ENCODE measurements at regions of chr7 and their contacts with region 1.

Region 1: DNA sequence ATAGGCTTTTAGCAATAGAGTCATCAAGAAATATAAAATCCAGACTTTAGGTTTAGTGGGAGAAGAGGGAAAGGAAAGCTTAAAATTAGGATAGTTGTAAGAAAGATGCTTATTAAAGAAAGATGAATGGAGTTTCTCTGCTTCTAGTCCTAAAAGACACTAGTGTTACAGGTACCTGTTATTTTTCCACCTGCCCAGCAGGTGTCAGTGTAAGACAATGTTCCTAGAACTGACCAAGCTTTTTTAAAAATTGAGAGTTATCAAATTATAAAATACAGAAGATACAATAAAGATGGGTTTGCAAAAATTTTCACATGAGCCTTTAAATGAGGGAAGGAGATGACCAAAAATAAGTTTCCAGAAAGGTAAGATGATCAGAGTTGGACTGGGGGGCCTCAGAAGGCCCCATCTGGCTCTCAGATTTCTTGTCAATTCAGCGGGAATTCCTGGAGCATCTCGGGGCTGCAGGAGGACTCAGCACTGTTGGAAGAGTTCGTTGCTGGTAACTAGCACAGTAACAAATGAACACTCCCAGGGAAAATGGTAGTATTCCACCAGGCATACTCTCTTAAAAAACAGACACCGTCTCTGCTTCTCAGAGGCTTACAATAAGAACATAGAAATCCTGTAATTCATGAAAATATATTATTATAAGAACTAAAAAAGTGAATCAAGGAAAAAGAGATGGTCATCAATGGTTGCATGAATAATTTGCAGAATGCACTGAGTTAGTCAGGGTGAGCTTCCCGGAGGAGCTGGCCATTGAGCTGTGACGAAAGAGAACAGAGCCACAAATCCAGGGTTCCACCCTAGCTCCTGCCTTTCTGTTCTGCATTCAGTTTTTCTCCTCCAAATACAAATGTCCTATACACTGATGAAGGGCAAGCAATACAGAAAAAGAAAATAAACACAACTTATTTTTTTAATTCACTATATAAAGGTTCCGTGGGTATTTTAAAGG is 71.8 kb upstream of the PIK3CG start:
- DNase-seq: peak in 9 of 14 experiments; percentile 12 to 78 (median 22)
- ATAC-seq: peak; percentile 58
- H3K4me3 ChIP-seq: no peak overlapping the region
- H3K4me3 Mint-ChIP-seq: no peak overlapping the region
- H3K27ac ChIP-seq: no peak overlapping the region
- H3K27ac Mint-ChIP-seq: no peak overlapping the region
- H3K4me1 ChIP-seq: no peaks in the 10 kb centered on the region
- H3K4me1 Mint-ChIP-seq: peaks cover 3% of the 10 kb centered on the region
- H3K27me3 ChIP-seq: no peaks in the 10 kb centered on the region
- H3K27me3 Mint-ChIP-seq: no peaks in the 10 kb centered on the region
- CTCF ChIP-seq: peak; percentile 88

Region 2: GRCh38 chr7:106865130-106866041 is 72.1 kb after region 1 on chr7 and contains the start of gene PIK3CG:
- CTCF ChIA-PET with region 1: no interaction called
- POLR2A ChIA-PET with region 1: no interaction called
- intact Hi-C with region 1: loop called (anchors 1 kb)
- DNase-seq: peak in 5 of 14 experiments; percentile 6 to 86 (median 75)
- ATAC-seq: peak; percentile 94
- H3K4me3 ChIP-seq: peak within 1 kb of the TSS; percentile 62
- H3K4me3 Mint-ChIP-seq: peak within 1 kb of the TSS; percentile 92
- H3K27ac ChIP-seq: peak within 1 kb of the TSS; percentile 77 to 80
- H3K27ac Mint-ChIP-seq: peak within 1 kb of the TSS; percentile 93
- H3K4me1 ChIP-seq: peaks cover 61% of the 10 kb centered on the region
- H3K4me1 Mint-ChIP-seq: peaks cover 82% of the 10 kb centered on the region
- H3K27me3 ChIP-seq: no peaks in the 10 kb centered on the region
- H3K27me3 Mint-ChIP-seq: no peaks in the 10 kb centered on the region
- CTCF ChIP-seq: no peak
- total RNA-seq, gene PIK3CG: 20.8 to 21.2 TPM

Region 3: DNA sequence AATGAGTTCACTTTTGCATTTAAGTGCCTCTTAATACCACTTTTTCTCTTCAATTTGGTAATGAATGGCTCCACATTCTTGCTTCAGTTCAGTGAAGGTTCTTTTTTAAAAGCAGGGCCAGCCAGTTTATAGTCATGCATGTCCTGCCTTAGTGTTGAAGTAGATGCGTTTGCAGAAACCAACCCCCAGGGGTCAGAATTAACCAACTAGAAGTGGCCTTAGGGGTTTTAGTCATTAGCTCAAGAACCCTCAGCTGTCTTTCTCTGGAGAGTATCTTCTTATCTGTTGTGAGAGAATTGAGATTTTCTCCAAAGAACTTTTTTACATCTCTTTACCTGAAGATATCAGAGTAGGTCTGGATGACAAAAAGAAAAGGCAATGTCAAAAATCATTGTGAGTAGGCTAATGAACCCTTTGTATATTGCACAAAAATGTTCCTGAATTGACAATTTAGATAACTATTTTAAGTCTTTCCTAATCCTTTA is 154.0 kb after region 1 on chr7:
- CTCF ChIA-PET with region 1: no interaction called
- POLR2A ChIA-PET with region 1: no interaction called
- intact Hi-C with region 1: loop called in 1 of 2 experiments (anchors 2 kb)
- DNase-seq: peak in 8 of 14 experiments; percentile 5 to 66 (median 30)
- ATAC-seq: peak; percentile 59
- H3K4me3 ChIP-seq: no peak overlapping the region
- H3K4me3 Mint-ChIP-seq: no peak overlapping the region
- H3K27ac ChIP-seq: no peak overlapping the region
- H3K27ac Mint-ChIP-seq: no peak overlapping the region
- H3K4me1 ChIP-seq: no peaks in the 10 kb centered on the region
- H3K4me1 Mint-ChIP-seq: no peaks in the 10 kb centered on the region
- H3K27me3 ChIP-seq: no peaks in the 10 kb centered on the region
- H3K27me3 Mint-ChIP-seq: no peaks in the 10 kb centered on the region
- CTCF ChIP-seq: peak; percentile 33

Region 4: DNA sequence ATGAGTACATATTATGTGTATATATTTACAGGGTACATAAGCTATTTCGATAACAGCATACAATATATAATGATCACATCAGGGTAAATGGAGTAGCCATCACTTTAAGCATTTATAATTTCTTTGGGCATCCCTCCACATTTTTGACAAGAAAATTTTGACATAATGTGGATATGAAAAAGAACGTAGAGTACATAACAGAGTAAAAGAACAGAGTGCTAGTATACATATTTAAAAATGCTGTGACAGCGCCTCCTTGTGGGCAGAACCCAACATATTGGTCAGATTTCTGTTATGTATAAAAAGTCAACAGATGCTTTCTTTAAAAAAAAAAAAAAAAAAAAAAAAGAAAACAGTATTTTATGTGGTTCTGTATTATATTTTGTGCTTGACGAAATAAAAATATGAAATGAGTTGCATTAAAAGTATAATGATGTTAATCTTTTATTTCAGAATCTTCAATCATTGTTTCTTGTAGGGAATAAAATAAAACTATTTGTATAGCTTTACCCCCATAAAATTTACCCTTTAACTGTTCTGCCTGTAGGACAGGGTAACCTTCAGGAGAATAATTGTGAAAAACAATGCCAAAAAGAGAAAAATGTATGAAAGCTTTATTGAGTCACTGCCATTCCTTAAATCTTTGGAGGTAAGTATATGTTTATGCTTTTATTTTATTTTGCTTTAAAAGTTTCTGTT is 357.2 kb after region 1 on chr7:
- CTCF ChIA-PET with region 1: interaction called, 12 read pairs
- POLR2A ChIA-PET with region 1: interaction called, 3 read pairs
- intact Hi-C with region 1: loop called (anchors 1 kb)
- DNase-seq: peak; percentile 60 to 89 (median 76)
- ATAC-seq: peak; percentile 89
- H3K4me3 ChIP-seq: no peak overlapping the region
- H3K4me3 Mint-ChIP-seq: no peak overlapping the region
- H3K27ac ChIP-seq: no peak overlapping the region
- H3K27ac Mint-ChIP-seq: no peak overlapping the region
- H3K4me1 ChIP-seq: no peaks in the 10 kb centered on the region
- H3K4me1 Mint-ChIP-seq: peaks cover 6% of the 10 kb centered on the region
- H3K27me3 ChIP-seq: no peaks in the 10 kb centered on the region
- H3K27me3 Mint-ChIP-seq: no peaks in the 10 kb centered on the region
- CTCF ChIP-seq: peak; percentile 94

Region 5: DNA sequence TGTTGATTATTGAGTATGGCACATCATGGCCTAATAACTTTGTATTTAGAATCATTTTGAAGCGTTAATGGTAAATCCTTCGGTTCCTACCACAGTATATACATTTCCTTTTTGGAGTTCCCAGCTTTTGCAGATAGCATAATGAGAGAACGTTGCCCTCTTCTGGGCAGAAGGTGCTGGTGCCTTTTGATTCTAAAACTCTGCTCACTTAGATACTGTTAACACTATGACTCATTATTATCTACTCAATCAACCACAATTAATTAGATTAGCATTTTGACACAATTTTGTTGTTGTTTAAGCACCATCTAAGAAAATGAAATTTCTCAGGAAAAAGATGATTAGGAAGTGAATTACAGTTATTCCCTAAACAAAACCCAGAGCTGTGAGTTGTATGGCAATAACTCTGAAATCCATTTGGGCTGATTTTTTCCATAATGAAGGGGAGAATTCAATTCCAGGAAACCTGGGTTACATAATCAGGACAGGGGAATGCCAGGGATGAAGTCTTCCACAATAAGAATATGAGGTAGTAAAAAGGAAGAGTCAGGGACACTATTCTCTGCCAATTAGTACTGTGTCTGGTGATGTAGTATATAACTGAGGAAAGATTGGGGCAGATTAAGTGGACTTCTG is 1086.2 kb after region 1 on chr7:
- CTCF ChIA-PET with region 1: no interaction called
- POLR2A ChIA-PET with region 1: no interaction called
- intact Hi-C with region 1: loop called in 1 of 2 experiments (anchors 2 kb)
- DNase-seq: peak in 6 of 14 experiments; percentile 9 to 79 (median 58)
- ATAC-seq: peak; percentile 74
- H3K4me3 ChIP-seq: no peak overlapping the region
- H3K4me3 Mint-ChIP-seq: no peak overlapping the region
- H3K27ac ChIP-seq: no peak overlapping the region
- H3K27ac Mint-ChIP-seq: no peak overlapping the region
- H3K4me1 ChIP-seq: peaks cover 4% of the 10 kb centered on the region
- H3K4me1 Mint-ChIP-seq: peaks cover 36% of the 10 kb centered on the region
- H3K27me3 ChIP-seq: peaks cover 0 to 5% of the 10 kb centered on the region in 2 experiments
- H3K27me3 Mint-ChIP-seq: peaks cover 18% of the 10 kb centered on the region
- CTCF ChIP-seq: peak; percentile 72

Measured in CD4-positive, alpha-beta T cell (primary cell).